Cardiac septum (tissue), 1 donor: ENCODE measurements at regions of chr15 and their contacts with region 1.

Region 1: GRCh38 chr15:69394556-69395282 is 19.4 kb upstream of the KIF23 start:
- DNase-seq: peak; percentile 91

Region 2: GRCh38 chr15:69272139-69272538 is 122.6 kb before region 1 on chr15:
- intact Hi-C with region 1: loop called (anchors 10 kb)
- DNase-seq: no peak

Region 3: GRCh38 chr15:69424748-69425413 is 30.2 kb after region 1 on chr15:
- intact Hi-C with region 1: no loop called
- DNase-seq: no peak

Region 4: DNA sequence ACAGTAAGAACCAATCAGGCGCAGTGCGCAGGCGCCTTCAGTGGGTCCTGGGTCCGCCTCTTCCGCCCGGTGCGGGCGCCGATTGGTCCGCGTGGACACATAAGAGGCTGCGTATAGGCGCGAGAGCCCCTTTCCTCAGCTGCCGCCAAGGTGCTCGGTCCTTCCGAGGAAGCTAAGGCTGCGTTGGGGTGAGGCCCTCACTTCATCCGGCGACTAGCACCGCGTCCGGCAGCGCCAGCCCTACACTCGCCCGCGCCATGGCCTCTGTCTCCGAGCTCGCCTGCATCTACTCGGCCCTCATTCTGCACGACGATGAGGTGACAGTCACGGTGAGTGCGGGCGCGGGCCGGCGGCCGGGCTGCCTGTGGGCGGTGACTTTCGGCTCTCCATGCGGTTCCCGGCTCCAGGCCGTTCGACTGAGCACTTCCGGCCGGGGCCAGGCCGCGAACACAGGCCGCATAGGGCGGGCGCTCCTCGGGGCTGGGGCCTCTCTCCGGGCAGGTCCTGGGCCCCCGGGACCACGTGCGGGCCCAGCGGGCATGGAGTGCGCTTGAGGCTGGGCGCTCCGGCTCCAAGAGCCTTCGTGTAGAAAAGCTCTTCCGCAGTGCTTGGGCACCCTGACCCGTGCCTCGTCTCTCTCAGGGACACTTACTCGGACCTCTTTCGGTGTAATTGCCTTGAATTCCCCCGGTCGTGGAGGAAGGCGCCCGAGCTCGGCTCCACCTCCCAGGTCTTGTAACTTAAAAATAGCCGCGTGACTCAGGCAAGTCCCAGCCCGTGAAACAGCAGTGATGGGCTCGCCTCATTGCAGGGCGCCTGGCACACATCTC is 58.2 kb after region 1 on chr15 and contains the start of gene RPLP1:
- intact Hi-C with region 1: no loop called
- DNase-seq: peak; percentile 98
- total RNA-seq, gene RPLP1: 1,178 TPM